ENCODE measurements at regions of chr17 and their contacts with region 1.

Region 1: GRCh38 chr17:8745586-8746500 is 1.2 kb upstream of the CCDC42 start:
- DNase-seq: peak; percentile 87
- ATAC-seq: peak; percentile 93

Region 2: GRCh38 chr17:8572764-8573163 is 173.1 kb before region 1 on chr17:
- intact Hi-C with region 1: loop called (anchors 10 kb)
- DNase-seq: no peak
- ATAC-seq: no peak

Region 3: DNA sequence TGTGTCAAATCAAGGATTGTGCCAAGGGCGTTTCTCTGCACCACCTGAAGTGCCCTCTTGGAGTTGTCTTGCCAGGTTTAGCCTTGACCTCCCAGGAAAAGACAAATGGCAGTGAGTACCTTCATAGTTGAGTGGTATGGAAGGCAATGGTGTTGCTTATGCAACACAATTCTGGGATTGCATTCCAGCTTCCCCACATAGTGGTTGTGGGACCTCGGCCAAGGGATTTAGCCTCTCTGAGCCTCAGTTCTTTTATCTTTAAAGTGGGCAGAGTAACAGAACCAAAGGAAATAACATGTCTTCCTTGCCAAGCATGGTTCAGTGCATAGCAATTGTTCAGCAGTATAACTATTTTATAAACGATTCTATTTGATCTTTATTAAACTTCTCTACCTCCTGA is 50.6 kb before region 1 on chr17:
- intact Hi-C with region 1: loop called (anchors 2 kb)
- DNase-seq: no peak
- ATAC-seq: no peak

Region 4: GRCh38 chr17:9427465-9428315 is 681.8 kb after region 1 on chr17:
- intact Hi-C with region 1: no loop called
- DNase-seq: no peak
- ATAC-seq: peak; percentile 61

Measured in sciatic nerve (tissue), 2 donors.